MCF 10A (cell line): ENCODE measurements at regions of chr13 and their contacts with region 1.

Region 1: DNA sequence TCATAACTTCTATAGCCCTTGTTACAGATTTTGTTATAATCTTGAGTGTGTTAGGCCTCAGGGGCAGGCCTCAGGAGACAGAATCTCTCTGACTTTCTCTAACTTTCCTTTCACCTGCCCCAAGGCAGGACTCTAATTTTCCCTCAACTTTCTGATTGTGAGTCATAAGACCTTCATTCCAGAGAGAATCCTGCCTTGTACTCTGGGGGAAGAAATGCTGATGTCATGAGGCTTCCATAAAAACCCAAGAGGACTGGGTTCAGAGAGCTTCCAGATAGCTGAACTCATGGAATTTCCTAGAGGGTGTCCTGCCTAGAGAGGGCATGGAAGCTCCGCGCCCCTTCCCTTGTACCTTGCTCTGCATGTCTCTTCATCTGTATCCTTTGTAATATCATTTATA is 5.3 kb upstream of the KBTBD6 start:
- DNase-seq: peak; percentile 84
- H3K4me3 Mint-ChIP-seq: no peak overlapping the region
- H3K27ac Mint-ChIP-seq: peak overlapping the region; percentile 86
- H3K4me1 Mint-ChIP-seq: peaks cover 41% of the 10 kb centered on the region
- H3K27me3 Mint-ChIP-seq: no peaks in the 10 kb centered on the region
- CTCF ChIP-seq: no peak

Region 2: GRCh38 chr13:41029629-41030028 is 108.3 kb before region 1 on chr13:
- CTCF ChIA-PET with region 1: no interaction called
- POLR2A ChIA-PET with region 1: no interaction called
- intact Hi-C with region 1: no loop called
- DNase-seq: no peak
- H3K4me3 Mint-ChIP-seq: no peak overlapping the region
- H3K27ac Mint-ChIP-seq: no peak overlapping the region
- H3K4me1 Mint-ChIP-seq: peaks cover 12% of the 10 kb centered on the region
- H3K27me3 Mint-ChIP-seq: no peaks in the 10 kb centered on the region
- CTCF ChIP-seq: no peak

Region 3: GRCh38 chr13:41179593-41180250 is 41.8 kb after region 1 on chr13:
- CTCF ChIA-PET with region 1: no interaction called
- POLR2A ChIA-PET with region 1: interaction called, 26 read pairs
- intact Hi-C with region 1: no loop called
- DNase-seq: peak; percentile 4
- H3K4me3 Mint-ChIP-seq: no peak overlapping the region
- H3K27ac Mint-ChIP-seq: no peak overlapping the region
- H3K4me1 Mint-ChIP-seq: peaks cover 10% of the 10 kb centered on the region
- H3K27me3 Mint-ChIP-seq: no peaks in the 10 kb centered on the region
- CTCF ChIP-seq: no peak